ENCODE measurements at regions of chr18 and their contacts with region 1.

Region 1: GRCh38 chr18:34976899-34977837 is 64.0 kb upstream of the MAPRE2 start:
- DNase-seq: peak; percentile 55 to 89 (median 85)
- ATAC-seq: peak; percentile 81
- H3K4me3 ChIP-seq: peak overlapping the region; percentile 87 to 93
- H3K4me3 Mint-ChIP-seq: peak overlapping the region; percentile 96
- H3K27ac ChIP-seq: peak overlapping the region in 1 of 2 experiments; percentile 35
- H3K27ac Mint-ChIP-seq: peak overlapping the region; percentile 70
- H3K4me1 ChIP-seq: peaks cover 11% of the 10 kb centered on the region
- H3K4me1 Mint-ChIP-seq: peaks cover 26% of the 10 kb centered on the region
- H3K27me3 ChIP-seq: no peaks in the 10 kb centered on the region
- H3K27me3 Mint-ChIP-seq: no peaks in the 10 kb centered on the region
- CTCF ChIP-seq: no peak

Region 2: GRCh38 chr18:35215026-35215425 is 237.9 kb after region 1 on chr18:
- CTCF ChIA-PET with region 1: no interaction called
- POLR2A ChIA-PET with region 1: no interaction called
- intact Hi-C with region 1: no loop called
- DNase-seq: no peak
- ATAC-seq: no peak
- H3K4me3 ChIP-seq: no peak overlapping the region
- H3K4me3 Mint-ChIP-seq: no peak overlapping the region
- H3K27ac ChIP-seq: no peak overlapping the region
- H3K27ac Mint-ChIP-seq: no peak overlapping the region
- H3K4me1 ChIP-seq: no peaks in the 10 kb centered on the region
- H3K4me1 Mint-ChIP-seq: no peaks in the 10 kb centered on the region
- H3K27me3 ChIP-seq: no peaks in the 10 kb centered on the region
- H3K27me3 Mint-ChIP-seq: no peaks in the 10 kb centered on the region
- CTCF ChIP-seq: no peak

Region 3: GRCh38 chr18:35290073-35290735 is 313.0 kb after region 1 on chr18 and contains the start of gene ZSCAN30:
- CTCF ChIA-PET with region 1: no interaction called
- POLR2A ChIA-PET with region 1: no interaction called
- intact Hi-C with region 1: loop called (anchors 2 kb)
- DNase-seq: peak; percentile 92 to 98 (median 96)
- ATAC-seq: peak; percentile 94
- H3K4me3 ChIP-seq: peak within 1 kb of the TSS; percentile 78 to 82
- H3K4me3 Mint-ChIP-seq: peak within 1 kb of the TSS; percentile 99
- H3K27ac ChIP-seq: peak within 1 kb of the TSS; percentile 69 to 85
- H3K27ac Mint-ChIP-seq: peak within 1 kb of the TSS; percentile 99
- H3K4me1 ChIP-seq: peaks cover 17% of the 10 kb centered on the region
- H3K4me1 Mint-ChIP-seq: peaks cover 70% of the 10 kb centered on the region
- H3K27me3 ChIP-seq: no peaks in the 10 kb centered on the region
- H3K27me3 Mint-ChIP-seq: no peaks in the 10 kb centered on the region
- CTCF ChIP-seq: no peak
- total RNA-seq, gene ZSCAN30: 6.2 to 6.3 TPM

Region 4: DNA sequence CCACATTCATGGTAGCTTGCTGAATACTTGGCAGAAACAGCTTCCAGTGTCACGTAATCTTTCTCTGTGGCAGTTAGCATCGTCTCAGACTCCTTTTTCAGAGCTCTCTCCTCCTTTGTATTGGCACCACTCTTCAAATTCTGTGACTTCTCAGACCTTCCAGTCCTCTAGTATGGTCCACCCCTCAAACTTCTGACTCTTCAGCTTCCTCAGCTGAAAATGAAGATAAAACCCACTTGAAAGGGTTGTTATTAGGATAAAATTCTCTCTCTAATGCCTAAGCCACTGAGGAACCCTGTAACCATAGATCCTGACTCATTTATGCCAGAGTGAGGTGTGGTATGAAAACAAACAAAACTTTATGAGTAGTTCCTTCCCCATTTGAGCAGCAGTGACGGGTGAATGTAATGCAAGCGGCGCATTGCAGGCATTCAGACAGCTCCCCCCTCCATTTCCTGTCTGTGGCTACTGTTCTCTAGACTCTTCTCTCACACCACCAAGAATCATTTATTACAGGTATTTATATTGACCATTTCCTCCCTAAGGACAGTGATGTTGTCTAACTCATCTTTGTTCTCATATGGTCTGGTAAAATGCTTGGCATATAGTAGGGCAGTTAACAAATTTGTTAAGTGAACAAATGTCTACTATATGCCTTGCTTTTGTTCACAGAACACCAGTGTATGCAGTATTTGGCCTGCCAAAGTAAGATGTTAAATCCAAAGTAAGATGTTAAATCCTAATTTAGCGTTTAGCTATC is 639.7 kb after region 1 on chr18:
- CTCF ChIA-PET with region 1: no interaction called
- POLR2A ChIA-PET with region 1: no interaction called
- intact Hi-C with region 1: loop called in 1 of 2 experiments (anchors 10 kb)
- DNase-seq: peak; percentile 10 to 82 (median 62)
- ATAC-seq: peak; percentile 92
- H3K4me3 ChIP-seq: peak overlapping the region in 1 of 2 experiments; percentile 10
- H3K4me3 Mint-ChIP-seq: no peak overlapping the region
- H3K27ac ChIP-seq: peak overlapping the region; percentile 27 to 76
- H3K27ac Mint-ChIP-seq: no peak overlapping the region
- H3K4me1 ChIP-seq: peaks cover 19% of the 10 kb centered on the region
- H3K4me1 Mint-ChIP-seq: peaks cover 20% of the 10 kb centered on the region
- H3K27me3 ChIP-seq: no peaks in the 10 kb centered on the region
- H3K27me3 Mint-ChIP-seq: no peaks in the 10 kb centered on the region
- CTCF ChIP-seq: no peak

Region 5: GRCh38 chr18:36067055-36067957 is 1090.1 kb after region 1 on chr18 and contains the start of gene RPRD1A:
- CTCF ChIA-PET with region 1: no interaction called
- POLR2A ChIA-PET with region 1: no interaction called
- intact Hi-C with region 1: loop called (anchors 5 kb)
- DNase-seq: peak; percentile 92 to 99 (median 97)
- ATAC-seq: peak; percentile 93
- H3K4me3 ChIP-seq: peak within 1 kb of the TSS; percentile 95 to 98
- H3K4me3 Mint-ChIP-seq: peak within 1 kb of the TSS; percentile 94
- H3K27ac ChIP-seq: peak within 1 kb of the TSS; percentile 88 to 89
- H3K27ac Mint-ChIP-seq: peak within 1 kb of the TSS; percentile 96
- H3K4me1 ChIP-seq: peaks cover 29% of the 10 kb centered on the region
- H3K4me1 Mint-ChIP-seq: peaks cover 46% of the 10 kb centered on the region
- H3K27me3 ChIP-seq: no peaks in the 10 kb centered on the region
- H3K27me3 Mint-ChIP-seq: peaks cover 3% of the 10 kb centered on the region
- CTCF ChIP-seq: no peak
- total RNA-seq, gene RPRD1A: 13.8 to 15.8 TPM